B cell (primary cell): ENCODE measurements at regions of chr11 and their contacts with region 1.

Region 1: GRCh38 chr11:1309498-1310317 is at the start of gene TOLLIP:
- DNase-seq: peak; percentile 98
- ATAC-seq: peak; percentile 71
- H3K4me3 ChIP-seq: peak within 1 kb of the TSS; percentile 28 to 71 (median 69)
- H3K4me3 Mint-ChIP-seq: peak within 1 kb of the TSS; percentile 83
- H3K27ac ChIP-seq: peak within 1 kb of the TSS; percentile 87
- H3K27ac Mint-ChIP-seq: peak within 1 kb of the TSS; percentile 94
- H3K4me1 ChIP-seq: peaks cover 48 to 53% of the 10 kb centered on the region in 2 donors
- H3K4me1 Mint-ChIP-seq: peaks cover 57% of the 10 kb centered on the region
- H3K27me3 ChIP-seq: no peaks in the 10 kb centered on the region
- H3K27me3 Mint-ChIP-seq: no peaks in the 10 kb centered on the region
- CTCF ChIP-seq: no peak
- total RNA-seq, gene TOLLIP: 52.5 and 59.7 TPM in 2 replicates

Region 2: GRCh38 chr11:1262172-1263006 is 47.3 kb before region 1 on chr11:
- CTCF ChIA-PET with region 1: interaction called, 3 read pairs
- POLR2A ChIA-PET with region 1: interaction called, 3 read pairs
- intact Hi-C with region 1: loop called (anchors 1 kb)
- DNase-seq: peak; percentile 83
- ATAC-seq: peak; percentile 94
- H3K4me3 ChIP-seq: peak overlapping the region in 4 of 5 experiments; percentile 54 to 67 (median 62)
- H3K4me3 Mint-ChIP-seq: peak overlapping the region; percentile 87
- H3K27ac ChIP-seq: peak overlapping the region; percentile 25 to 79
- H3K27ac Mint-ChIP-seq: peak overlapping the region; percentile 86
- H3K4me1 ChIP-seq: peaks cover 12 to 20% of the 10 kb centered on the region in 2 donors
- H3K4me1 Mint-ChIP-seq: peaks cover 19% of the 10 kb centered on the region
- H3K27me3 ChIP-seq: no peaks in the 10 kb centered on the region
- H3K27me3 Mint-ChIP-seq: no peaks in the 10 kb centered on the region
- CTCF ChIP-seq: no peak

Region 3: GRCh38 chr11:1335811-1336761 is 26.4 kb after region 1 on chr11:
- CTCF ChIA-PET with region 1: interaction called, 7 read pairs
- POLR2A ChIA-PET with region 1: no interaction called
- intact Hi-C with region 1: loop called (anchors 1 kb)
- DNase-seq: peak; percentile 69
- ATAC-seq: peak; percentile 54
- H3K4me3 ChIP-seq: peak overlapping the region; percentile 42 to 66 (median 59)
- H3K4me3 Mint-ChIP-seq: peak overlapping the region; percentile 85
- H3K27ac ChIP-seq: no peak overlapping the region
- H3K27ac Mint-ChIP-seq: peak overlapping the region; percentile 81
- H3K4me1 ChIP-seq: peaks cover 12 to 13% of the 10 kb centered on the region in 2 donors
- H3K4me1 Mint-ChIP-seq: peaks cover 21% of the 10 kb centered on the region
- H3K27me3 ChIP-seq: peaks cover 0 to 8% (median 0%) of the 10 kb centered on the region in 4 experiments
- H3K27me3 Mint-ChIP-seq: no peaks in the 10 kb centered on the region
- CTCF ChIP-seq: no peak

Region 4: GRCh38 chr11:1382831-1383607 is 73.3 kb after region 1 on chr11:
- CTCF ChIA-PET with region 1: interaction called, 31 read pairs
- POLR2A ChIA-PET with region 1: interaction called, 15 read pairs
- intact Hi-C with region 1: loop called (anchors 1 kb)
- DNase-seq: peak; percentile 92
- ATAC-seq: peak; percentile 76
- H3K4me3 ChIP-seq: peak overlapping the region in 4 of 5 experiments; percentile 64 to 81 (median 70)
- H3K4me3 Mint-ChIP-seq: peak overlapping the region; percentile 87
- H3K27ac ChIP-seq: peak overlapping the region; percentile 96
- H3K27ac Mint-ChIP-seq: peak overlapping the region; percentile 96
- H3K4me1 ChIP-seq: peaks cover 3 to 30% of the 10 kb centered on the region in 2 donors
- H3K4me1 Mint-ChIP-seq: peaks cover 35% of the 10 kb centered on the region
- H3K27me3 ChIP-seq: peaks cover 0 to 2% (median 0%) of the 10 kb centered on the region in 4 experiments
- H3K27me3 Mint-ChIP-seq: no peaks in the 10 kb centered on the region
- CTCF ChIP-seq: no peak

Region 5: DNA sequence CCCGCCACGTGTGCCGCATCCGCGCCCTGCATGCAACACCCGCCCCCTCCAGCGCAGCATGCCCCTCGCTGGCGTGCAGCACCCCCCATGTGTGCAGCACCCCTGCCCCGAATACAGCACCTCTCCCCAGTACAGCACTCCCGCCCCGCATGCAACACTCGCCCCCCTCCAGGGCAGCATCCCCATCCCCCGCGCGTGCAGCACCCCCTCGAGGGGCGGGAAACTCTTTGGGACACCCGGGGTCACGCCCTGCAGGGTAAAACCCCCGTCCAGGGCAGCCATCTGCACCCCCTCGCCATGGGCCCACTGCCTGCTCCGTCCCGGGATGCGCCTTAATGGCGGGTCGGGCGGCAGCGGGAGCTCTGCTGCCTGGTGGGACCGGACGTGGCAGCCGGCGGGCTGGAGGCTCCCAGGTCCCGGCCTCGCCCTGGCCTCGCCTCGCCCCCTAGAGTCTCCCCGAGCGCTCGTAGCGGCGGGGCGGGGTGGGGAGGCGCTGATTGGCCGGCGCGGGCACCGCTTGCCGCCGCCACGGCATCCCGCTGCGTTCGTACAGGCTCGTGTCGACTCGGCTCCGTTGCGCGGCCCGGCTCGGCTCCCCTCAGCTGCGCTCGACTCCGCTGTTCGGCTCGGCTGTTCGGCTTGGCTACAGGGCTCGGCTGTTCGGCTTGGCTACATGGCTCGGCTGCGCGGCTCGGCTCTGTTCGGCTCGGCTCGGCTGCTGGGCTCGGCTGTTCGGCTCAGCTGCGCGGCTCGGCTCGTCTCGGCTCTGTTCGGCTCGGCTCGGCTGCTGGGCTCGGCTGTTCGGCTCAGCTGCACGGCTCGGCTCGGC is 79.6 kb after region 1 on chr11:
- CTCF ChIA-PET with region 1: interaction called, 31 read pairs
- POLR2A ChIA-PET with region 1: interaction called, 15 read pairs
- intact Hi-C with region 1: loop called (anchors 1 kb)
- DNase-seq: peak; percentile 97
- ATAC-seq: peak; percentile 94
- H3K4me3 ChIP-seq: peak overlapping the region in 4 of 5 experiments; percentile 56 to 70 (median 64)
- H3K4me3 Mint-ChIP-seq: peak overlapping the region; percentile 79
- H3K27ac ChIP-seq: peak overlapping the region in 1 of 2 donors; percentile 39
- H3K27ac Mint-ChIP-seq: peak overlapping the region; percentile 63
- H3K4me1 ChIP-seq: peaks cover 22 to 29% of the 10 kb centered on the region in 2 donors
- H3K4me1 Mint-ChIP-seq: peaks cover 35% of the 10 kb centered on the region
- H3K27me3 ChIP-seq: peaks cover 0 to 42% (median 23%) of the 10 kb centered on the region in 4 experiments
- H3K27me3 Mint-ChIP-seq: peaks cover 26% of the 10 kb centered on the region
- CTCF ChIP-seq: peak; percentile 26

Region 6: DNA sequence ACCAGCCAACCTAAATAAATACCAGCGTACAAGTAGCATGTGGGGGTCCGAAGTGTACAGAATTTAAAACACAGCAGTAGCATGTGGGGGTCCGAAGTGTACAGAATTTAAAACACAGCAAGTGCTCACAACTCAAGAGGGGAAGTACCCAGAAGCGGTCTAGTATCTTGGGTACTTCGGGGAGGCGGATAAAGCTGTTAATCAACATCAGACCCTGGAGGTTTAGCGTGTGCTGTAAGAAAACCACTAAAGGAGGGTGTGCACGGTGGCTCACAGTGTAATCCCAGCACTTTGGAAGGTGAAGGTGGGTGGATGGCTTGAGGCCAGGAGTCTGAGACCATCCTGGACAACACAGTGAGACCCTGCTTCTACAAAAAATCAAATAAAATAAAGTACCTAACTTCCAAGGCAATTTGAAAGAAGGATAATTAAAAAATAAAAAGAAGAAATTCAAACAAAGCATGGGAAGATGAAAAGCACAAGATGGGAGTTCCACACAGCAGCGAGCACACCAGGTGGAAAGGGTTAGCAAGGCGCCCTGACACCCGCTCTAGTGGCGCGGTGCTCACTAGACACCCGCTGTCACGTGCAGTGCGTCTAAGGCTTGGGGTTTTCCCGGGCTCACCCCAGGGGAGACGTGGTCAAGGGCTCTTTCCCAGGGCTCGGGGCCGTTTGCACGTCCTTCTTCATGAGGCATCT is 211.8 kb after region 1 on chr11:
- CTCF ChIA-PET with region 1: interaction called, 3 read pairs
- POLR2A ChIA-PET with region 1: no interaction called
- intact Hi-C with region 1: loop called (anchors 5 kb)
- DNase-seq: peak; percentile 89
- ATAC-seq: peak; percentile 93
- H3K4me3 ChIP-seq: peak overlapping the region in 3 of 5 experiments; percentile 11 to 34 (median 15)
- H3K4me3 Mint-ChIP-seq: peak overlapping the region; percentile 81
- H3K27ac ChIP-seq: peak overlapping the region; percentile 19 to 73
- H3K27ac Mint-ChIP-seq: peak overlapping the region; percentile 73
- H3K4me1 ChIP-seq: peaks cover 31 to 39% of the 10 kb centered on the region in 2 donors
- H3K4me1 Mint-ChIP-seq: peaks cover 61% of the 10 kb centered on the region
- H3K27me3 ChIP-seq: no peaks in the 10 kb centered on the region
- H3K27me3 Mint-ChIP-seq: no peaks in the 10 kb centered on the region
- CTCF ChIP-seq: no peak